Right ventricle myocardium inferior (tissue), 1 donor: ENCODE measurements at regions of chrX and their contacts with region 1.

Region 1: DNA sequence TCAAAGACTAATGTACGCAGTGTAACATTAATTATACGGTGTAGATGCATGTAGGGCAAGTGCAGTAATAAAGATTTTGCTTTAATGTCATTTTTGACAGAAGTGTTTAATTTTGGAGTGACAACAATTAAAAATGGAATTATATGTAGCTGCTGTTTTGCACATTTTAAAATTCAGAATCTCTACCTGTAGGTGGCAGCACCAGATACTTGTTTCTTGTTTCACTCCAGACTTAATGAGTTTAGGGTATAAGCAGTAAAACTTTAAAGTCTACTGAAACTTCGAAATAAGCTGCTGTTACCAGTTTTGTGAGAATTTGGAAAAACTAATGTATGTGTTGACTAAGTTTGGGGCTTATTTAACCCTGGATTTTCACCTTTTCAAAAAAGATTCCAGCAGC is 144.9 kb downstream of the POLA1 start:
- DNase-seq: no peak
- ATAC-seq: no peak

Region 2: DNA sequence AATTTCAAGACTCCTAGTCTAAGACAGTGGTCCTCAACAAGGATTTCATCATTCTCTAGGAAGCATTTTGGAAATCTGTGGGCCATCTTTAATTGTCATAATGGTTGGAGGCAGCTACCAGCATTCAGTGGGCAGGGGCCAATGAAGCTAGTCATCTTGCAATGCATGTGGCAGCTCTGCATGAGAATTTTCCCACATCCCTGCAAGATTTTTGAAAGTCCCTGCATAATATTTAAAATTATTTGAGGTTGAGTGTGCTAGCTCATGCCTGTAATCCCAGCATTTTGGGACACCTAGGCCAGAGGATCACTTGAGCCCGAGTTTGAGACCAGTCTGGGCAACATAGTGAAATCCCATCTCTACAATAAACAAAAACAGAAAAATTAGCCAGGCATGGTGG is 235.4 kb before region 1 on chrX:
- intact Hi-C with region 1: no loop called
- DNase-seq: no peak
- ATAC-seq: no peak

Region 3: GRCh38 chrX:24990535-24990934 is 151.9 kb after region 1 on chrX:
- intact Hi-C with region 1: no loop called
- DNase-seq: no peak
- ATAC-seq: no peak

Region 4: GRCh38 chrX:25004485-25005032 is 165.9 kb after region 1 on chrX:
- intact Hi-C with region 1: loop called (anchors 10 kb)
- DNase-seq: no peak
- ATAC-seq: no peak